Activated naive CD4-positive, alpha-beta T cell treated with anti-CD3 and anti-CD28 coated beads for 36 hours (primary cell): ENCODE measurements at regions of chr19 and their contacts with region 1.

Region 1: GRCh38 chr19:48468775-48469288 is 337 bp upstream of the CYTH2 start:
- DNase-seq: peak; percentile 100
- H3K4me3 Mint-ChIP-seq: peak overlapping the region; percentile 84
- H3K27ac Mint-ChIP-seq: peak overlapping the region; percentile 85
- H3K4me1 Mint-ChIP-seq: peaks cover 21% of the 10 kb centered on the region
- H3K27me3 Mint-ChIP-seq: no peaks in the 10 kb centered on the region

Region 2: GRCh38 chr19:46759817-46760333 is 1709.0 kb before region 1 on chr19:
- CTCF ChIA-PET with region 1: no interaction called
- intact Hi-C with region 1: no loop called
- DNase-seq: no peak
- H3K4me3 Mint-ChIP-seq: no peak overlapping the region
- H3K27ac Mint-ChIP-seq: no peak overlapping the region
- H3K4me1 Mint-ChIP-seq: no peaks in the 10 kb centered on the region
- H3K27me3 Mint-ChIP-seq: no peaks in the 10 kb centered on the region

Region 3: DNA sequence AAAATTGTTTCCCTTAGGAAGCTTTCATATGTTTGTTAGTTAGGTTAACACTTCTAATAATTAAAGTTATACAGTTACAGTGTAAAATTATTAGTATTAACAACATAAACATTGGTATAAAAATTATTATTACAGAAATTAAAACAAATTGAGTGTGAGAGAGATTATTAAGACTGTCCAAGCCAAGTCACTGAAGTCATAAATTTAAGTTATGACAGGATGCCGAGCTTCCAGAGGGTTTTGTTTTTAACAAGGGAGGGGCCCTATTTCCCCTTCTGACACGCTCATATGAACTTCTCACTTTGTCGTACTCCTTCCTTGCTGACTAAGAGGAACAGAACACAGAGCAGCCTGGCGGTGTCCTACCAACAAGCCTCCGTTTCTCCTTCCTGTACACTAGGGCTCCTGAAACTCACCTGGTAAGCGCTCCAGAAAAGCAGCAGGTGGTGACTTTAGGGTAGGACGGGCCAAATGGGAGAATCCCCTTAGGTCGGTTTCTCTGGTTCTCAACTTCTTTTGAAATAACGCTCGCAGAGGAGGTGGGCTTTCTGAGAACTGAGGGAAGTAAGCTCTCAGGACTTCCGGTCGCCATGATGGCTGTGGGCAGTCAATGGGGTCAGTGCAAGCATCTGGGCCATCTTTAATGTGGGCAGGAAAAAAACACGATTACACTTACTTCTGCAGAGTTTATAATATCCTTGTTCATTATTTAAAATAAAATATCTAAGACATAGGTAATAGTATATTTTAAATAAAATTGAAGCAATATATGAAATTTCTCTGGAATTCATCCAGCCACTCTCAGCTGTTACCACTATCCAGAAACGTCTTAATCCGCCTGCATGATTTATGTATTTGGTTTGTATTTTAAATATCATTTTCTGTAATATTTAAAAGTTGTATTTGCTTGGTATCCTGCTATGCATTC is 213.2 kb before region 1 on chr19 and contains the start of gene CARD8:
- CTCF ChIA-PET with region 1: no interaction called
- intact Hi-C with region 1: loop called (anchors 5 kb)
- DNase-seq: peak; percentile 88
- H3K4me3 Mint-ChIP-seq: peak within 1 kb of the TSS; percentile 92
- H3K27ac Mint-ChIP-seq: peak within 1 kb of the TSS; percentile 97
- H3K4me1 Mint-ChIP-seq: peaks cover 65% of the 10 kb centered on the region
- H3K27me3 Mint-ChIP-seq: no peaks in the 10 kb centered on the region
- total RNA-seq, gene CARD8: 99.8 to 104 TPM

Region 4: DNA sequence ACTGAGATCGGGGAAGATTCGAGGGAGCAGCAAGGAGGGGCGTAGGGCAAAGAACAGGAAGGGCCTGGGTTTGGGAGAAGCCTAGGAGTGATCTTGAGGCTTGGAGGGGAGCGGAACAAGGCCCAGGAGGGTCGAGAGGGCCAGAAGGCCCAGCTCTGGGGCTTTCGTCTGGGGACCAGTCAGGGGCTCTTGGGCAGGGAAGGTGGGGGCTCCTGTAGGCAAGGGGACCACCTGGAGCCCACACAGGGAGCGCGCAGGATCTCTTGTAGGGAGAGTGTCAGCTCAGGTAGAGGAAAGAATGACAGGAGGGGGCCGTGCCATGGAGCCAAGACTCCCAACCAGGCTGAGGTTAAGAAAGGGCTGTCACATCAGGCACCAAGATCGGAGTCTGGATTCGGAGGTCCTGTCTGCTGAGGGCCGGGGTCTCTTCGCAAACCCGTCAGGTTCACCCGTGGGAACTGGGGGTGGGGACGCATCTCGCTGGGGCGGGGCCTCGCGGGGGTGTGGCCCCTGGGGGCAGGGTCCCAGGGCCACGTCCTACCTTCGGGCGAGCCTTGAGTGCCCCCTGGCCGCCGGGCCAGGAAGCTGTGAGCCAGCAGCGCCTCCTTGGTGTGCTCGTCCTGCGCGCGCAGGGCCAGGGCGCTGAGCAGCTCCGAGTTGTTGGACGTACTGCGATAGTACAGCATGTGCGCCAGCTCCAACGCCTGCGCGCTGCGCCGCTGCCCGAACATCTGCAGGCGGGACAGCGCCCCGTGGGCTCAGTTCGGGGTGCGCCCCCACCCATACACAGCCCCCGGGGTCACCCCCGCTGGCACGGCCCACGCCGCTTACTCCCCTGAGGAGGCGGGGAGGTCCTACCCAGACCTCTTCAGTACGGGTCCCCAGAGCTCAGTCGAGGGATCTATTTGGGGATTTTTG is 135.1 kb before region 1 on chr19:
- CTCF ChIA-PET with region 1: no interaction called
- intact Hi-C with region 1: loop called (anchors 1 kb)
- DNase-seq: peak; percentile 95
- H3K4me3 Mint-ChIP-seq: peak overlapping the region; percentile 87
- H3K27ac Mint-ChIP-seq: peak overlapping the region; percentile 92
- H3K4me1 Mint-ChIP-seq: peaks cover 47% of the 10 kb centered on the region
- H3K27me3 Mint-ChIP-seq: no peaks in the 10 kb centered on the region

Region 5: GRCh38 chr19:48445606-48446481 is 23.0 kb before region 1 on chr19 and contains the start of gene GRWD1:
- CTCF ChIA-PET with region 1: interaction called, 3 read pairs
- intact Hi-C with region 1: loop called (anchors 1 kb)
- DNase-seq: peak; percentile 97
- H3K4me3 Mint-ChIP-seq: peak within 1 kb of the TSS; percentile 90
- H3K27ac Mint-ChIP-seq: peak within 1 kb of the TSS; percentile 84
- H3K4me1 Mint-ChIP-seq: peaks cover 35% of the 10 kb centered on the region
- H3K27me3 Mint-ChIP-seq: peaks cover 18% of the 10 kb centered on the region
- total RNA-seq, gene GRWD1: 32.4 to 36.0 TPM

Region 6: GRCh38 chr19:48500790-48501495 is 32.1 kb after region 1 on chr19:
- CTCF ChIA-PET with region 1: no interaction called
- intact Hi-C with region 1: no loop called
- DNase-seq: no peak
- H3K4me3 Mint-ChIP-seq: peak overlapping the region; percentile 74
- H3K27ac Mint-ChIP-seq: peak overlapping the region; percentile 80
- H3K4me1 Mint-ChIP-seq: peaks cover 22% of the 10 kb centered on the region
- H3K27me3 Mint-ChIP-seq: peaks cover 7% of the 10 kb centered on the region

Region 7: GRCh38 chr19:48513289-48514122 is 44.7 kb after region 1 on chr19:
- CTCF ChIA-PET with region 1: no interaction called
- intact Hi-C with region 1: loop called (anchors 2 kb)
- DNase-seq: peak; percentile 83
- H3K4me3 Mint-ChIP-seq: no peak overlapping the region
- H3K27ac Mint-ChIP-seq: peak overlapping the region; percentile 31
- H3K4me1 Mint-ChIP-seq: peaks cover 16% of the 10 kb centered on the region
- H3K27me3 Mint-ChIP-seq: no peaks in the 10 kb centered on the region

Region 8: DNA sequence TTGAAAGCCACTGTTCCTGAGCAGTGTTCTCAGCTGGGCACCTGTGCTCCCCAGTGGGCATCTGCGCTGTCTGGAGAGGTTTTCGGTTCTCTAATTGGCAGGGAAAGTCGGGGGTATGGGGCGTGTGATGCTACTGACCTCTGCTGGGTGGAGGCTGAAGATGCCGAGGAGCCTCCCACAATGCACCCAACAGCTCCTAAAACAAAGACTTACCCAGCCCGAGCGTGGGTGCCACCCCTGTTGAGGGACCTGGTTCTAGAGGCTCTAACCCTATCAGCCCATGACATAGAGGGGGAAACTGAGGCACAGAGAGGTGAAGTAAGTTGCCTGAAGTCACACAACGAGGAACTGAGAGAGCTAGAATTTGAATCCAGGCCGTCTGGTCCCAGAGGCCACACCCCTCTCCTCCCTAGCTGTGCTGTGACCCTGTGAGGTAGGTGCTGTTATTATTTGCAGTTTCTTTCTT is 140.0 kb after region 1 on chr19:
- CTCF ChIA-PET with region 1: no interaction called
- intact Hi-C with region 1: no loop called
- DNase-seq: peak; percentile 64
- H3K4me3 Mint-ChIP-seq: no peak overlapping the region
- H3K27ac Mint-ChIP-seq: no peak overlapping the region
- H3K4me1 Mint-ChIP-seq: peaks cover 2% of the 10 kb centered on the region
- H3K27me3 Mint-ChIP-seq: no peaks in the 10 kb centered on the region

Region 9: GRCh38 chr19:48713864-48714758 is 245.3 kb after region 1 on chr19:
- CTCF ChIA-PET with region 1: no interaction called
- intact Hi-C with region 1: loop called (anchors 1 kb)
- DNase-seq: peak; percentile 99
- H3K4me3 Mint-ChIP-seq: peak overlapping the region; percentile 86
- H3K27ac Mint-ChIP-seq: peak overlapping the region; percentile 58
- H3K4me1 Mint-ChIP-seq: peaks cover 11% of the 10 kb centered on the region
- H3K27me3 Mint-ChIP-seq: no peaks in the 10 kb centered on the region